SK-N-SH (cell line): ENCODE measurements at regions of chr1 and their contacts with region 1.

Region 1: GRCh38 chr1:32741413-32742198 is 39.0 kb upstream of the SYNC start:
- DNase-seq: peak; percentile 88
- H3K4me3 ChIP-seq: peak overlapping the region; percentile 66 to 72
- H3K27ac ChIP-seq: no peak overlapping the region
- H3K4me1 ChIP-seq: peaks cover 0 to 23% of the 10 kb centered on the region in 2 experiments; a peak in 1 of 4 replicates
- H3K27me3 ChIP-seq: no peaks in the 10 kb centered on the region
- CTCF ChIP-seq: peak; percentile 61
- EP300 ChIP-seq: no peak
- RAD21 ChIP-seq: no peak

Region 2: GRCh38 chr1:32724678-32725614 is 16.7 kb before region 1 on chr1:
- CTCF ChIA-PET with region 1: interaction called, 11 read pairs
- POLR2A ChIA-PET with region 1: no interaction called
- DNase-seq: peak; percentile 51
- H3K4me3 ChIP-seq: no peak overlapping the region
- H3K27ac ChIP-seq: peak overlapping the region in 1 of 2 experiments; percentile 10; a peak in 2 of 4 replicates
- H3K4me1 ChIP-seq: peaks cover 10 to 13% of the 10 kb centered on the region in 2 experiments; a peak in 3 of 4 replicates
- H3K27me3 ChIP-seq: no peaks in the 10 kb centered on the region
- CTCF ChIP-seq: no peak
- EP300 ChIP-seq: no peak
- RAD21 ChIP-seq: no peak

Region 3: DNA sequence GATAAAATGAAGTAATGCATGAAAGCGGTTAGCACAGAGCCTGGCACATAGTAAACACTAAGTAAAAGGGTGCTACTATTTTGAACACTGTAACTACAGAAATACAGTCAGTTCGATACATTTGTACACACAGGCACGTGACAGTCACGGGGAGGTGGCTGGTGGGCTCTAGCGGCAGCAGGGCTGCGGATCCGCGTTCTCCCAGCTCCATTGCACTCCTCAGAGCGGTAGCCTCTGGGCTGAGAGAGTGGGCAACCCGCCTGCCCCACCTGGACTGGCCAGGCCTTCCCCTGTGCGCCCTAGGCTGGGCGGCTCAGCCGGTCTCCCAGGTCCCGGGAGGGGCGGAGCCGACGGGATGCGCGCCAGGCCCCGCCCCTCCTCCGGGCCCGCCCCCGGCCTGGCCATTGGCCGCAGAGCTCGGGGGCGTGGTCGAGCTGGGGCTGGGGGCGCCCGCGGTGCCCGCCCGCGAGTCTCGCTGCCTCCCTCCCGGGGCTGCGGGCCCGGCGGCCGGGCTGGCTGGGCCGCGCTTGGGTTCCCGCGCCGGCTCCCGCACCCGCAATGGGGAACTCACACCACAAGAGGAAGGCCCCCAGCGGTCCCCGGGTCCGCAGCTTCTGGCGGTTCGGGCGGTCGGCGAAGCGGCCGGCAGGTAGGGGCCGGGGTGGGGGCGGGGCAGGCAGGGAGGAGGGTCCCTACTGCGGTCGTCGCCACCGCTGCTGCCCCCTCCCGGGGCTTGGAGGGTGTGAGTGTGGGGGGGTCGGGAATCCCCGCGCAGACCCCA is 12.1 kb after region 1 on chr1:
- CTCF ChIA-PET with region 1: interaction called, 12 read pairs
- POLR2A ChIA-PET with region 1: interaction called, 3 read pairs
- DNase-seq: peak; percentile 100
- H3K4me3 ChIP-seq: peak overlapping the region; percentile 65 to 71
- H3K27ac ChIP-seq: no peak overlapping the region; a peak in 1 of 4 replicates
- H3K4me1 ChIP-seq: peaks cover 0 to 17% of the 10 kb centered on the region in 2 experiments; a peak in 1 of 4 replicates
- H3K27me3 ChIP-seq: no peaks in the 10 kb centered on the region
- CTCF ChIP-seq: no peak
- EP300 ChIP-seq: no peak
- RAD21 ChIP-seq: no peak

Region 4: DNA sequence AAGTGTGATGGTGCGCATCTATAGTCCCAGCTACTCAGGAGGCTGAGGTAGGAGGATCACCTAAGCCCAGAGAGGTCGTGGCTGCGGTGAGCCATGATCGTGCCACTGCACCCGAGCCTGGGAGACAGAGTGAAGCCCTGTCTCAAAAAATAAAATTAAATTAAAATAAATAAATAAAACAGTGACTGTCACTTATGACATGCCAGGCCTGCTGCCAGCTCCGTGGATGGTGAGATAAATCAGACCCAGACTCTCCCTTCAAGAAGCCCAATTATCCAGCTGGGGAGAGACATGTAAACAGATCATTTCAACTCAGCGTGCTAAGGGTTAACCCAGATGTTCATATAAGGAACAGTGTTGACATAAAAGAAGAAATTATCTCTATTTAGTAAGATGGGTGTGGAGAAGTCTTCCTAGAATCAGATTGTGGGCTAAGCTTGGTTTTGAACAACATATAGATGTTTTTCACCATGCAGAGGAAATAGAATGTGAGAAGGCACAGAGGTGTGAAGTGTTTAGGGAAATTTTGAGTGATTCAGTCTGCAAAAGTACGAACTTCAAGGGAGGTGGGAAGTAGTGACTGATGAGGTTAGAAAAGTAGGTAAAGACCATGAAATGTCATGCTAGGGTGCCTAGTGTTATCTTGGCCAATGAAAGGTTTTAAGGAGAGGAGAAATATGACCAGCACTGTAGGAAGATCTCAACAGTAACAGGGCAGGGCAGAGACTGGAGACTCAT is 57.2 kb after region 1 on chr1:
- CTCF ChIA-PET with region 1: no interaction called
- POLR2A ChIA-PET with region 1: no interaction called
- DNase-seq: peak; percentile 45
- H3K4me3 ChIP-seq: no peak overlapping the region
- H3K27ac ChIP-seq: no peak overlapping the region
- H3K4me1 ChIP-seq: no peaks in the 10 kb centered on the region; a peak in 1 of 4 replicates
- H3K27me3 ChIP-seq: no peaks in the 10 kb centered on the region
- CTCF ChIP-seq: no peak
- EP300 ChIP-seq: no peak
- RAD21 ChIP-seq: no peak